H1 (cell line): ENCODE measurements at regions of chr12 and their contacts with region 1.

Region 1: GRCh38 chr12:111368788-111369495 is at the start of gene PHETA1:
- DNase-seq: peak; percentile 39 to 95
- H3K4me3 ChIP-seq: peak within 1 kb of the TSS; percentile 75 to 83 (median 80)
- H3K27ac ChIP-seq: no peak within 1 kb of the TSS
- H3K4me1 ChIP-seq: peaks cover 0 to 9% (median 3%) of the 10 kb centered on the region in 4 experiments; a peak in 6 of 7 replicates
- H3K27me3 ChIP-seq: peaks cover 0 to 18% (median 7%) of the 10 kb centered on the region in 4 experiments; a peak in 4 of 7 replicates
- CTCF ChIP-seq: no peak
- EP300 ChIP-seq: no peak
- POLR2A ChIP-seq: peak in 1 of 2 experiments; percentile 48; a peak in 1 of 3 replicates
- RAD21 ChIP-seq: no peak
- total RNA-seq, gene PHETA1: 12.3 and 13.7 TPM in 2 replicates

Region 2: GRCh38 chr12:111330800-111331752 is 37.9 kb before region 1 on chr12:
- CTCF ChIA-PET with region 1: interaction called, 18 read pairs
- POLR2A ChIA-PET with region 1: interaction called, 4 read pairs
- DNase-seq: no peak
- H3K4me3 ChIP-seq: no peak overlapping the region
- H3K27ac ChIP-seq: no peak overlapping the region
- H3K4me1 ChIP-seq: peaks cover 0 to 2% (median 0%) of the 10 kb centered on the region in 4 experiments; a peak in 1 of 7 replicates
- H3K27me3 ChIP-seq: no peaks in the 10 kb centered on the region
- CTCF ChIP-seq: peak in 2 of 3 experiments; percentile 53 to 59; a peak in 3 of 4 replicates
- EP300 ChIP-seq: no peak
- POLR2A ChIP-seq: no peak
- RAD21 ChIP-seq: peak; percentile 60 to 71

Region 3: GRCh38 chr12:111386885-111387284 is 17.9 kb after region 1 on chr12:
- CTCF ChIA-PET with region 1: interaction called, 3 read pairs
- POLR2A ChIA-PET with region 1: interaction called, 25 read pairs
- DNase-seq: no peak
- H3K4me3 ChIP-seq: no peak overlapping the region
- H3K27ac ChIP-seq: no peak overlapping the region
- H3K4me1 ChIP-seq: no peaks in the 10 kb centered on the region
- H3K27me3 ChIP-seq: no peaks in the 10 kb centered on the region; a peak in 1 of 7 replicates
- CTCF ChIP-seq: no peak
- EP300 ChIP-seq: no peak
- POLR2A ChIP-seq: no peak
- RAD21 ChIP-seq: no peak